ENCODE measurements at regions of chr6 and their contacts with region 1.

Region 1: DNA sequence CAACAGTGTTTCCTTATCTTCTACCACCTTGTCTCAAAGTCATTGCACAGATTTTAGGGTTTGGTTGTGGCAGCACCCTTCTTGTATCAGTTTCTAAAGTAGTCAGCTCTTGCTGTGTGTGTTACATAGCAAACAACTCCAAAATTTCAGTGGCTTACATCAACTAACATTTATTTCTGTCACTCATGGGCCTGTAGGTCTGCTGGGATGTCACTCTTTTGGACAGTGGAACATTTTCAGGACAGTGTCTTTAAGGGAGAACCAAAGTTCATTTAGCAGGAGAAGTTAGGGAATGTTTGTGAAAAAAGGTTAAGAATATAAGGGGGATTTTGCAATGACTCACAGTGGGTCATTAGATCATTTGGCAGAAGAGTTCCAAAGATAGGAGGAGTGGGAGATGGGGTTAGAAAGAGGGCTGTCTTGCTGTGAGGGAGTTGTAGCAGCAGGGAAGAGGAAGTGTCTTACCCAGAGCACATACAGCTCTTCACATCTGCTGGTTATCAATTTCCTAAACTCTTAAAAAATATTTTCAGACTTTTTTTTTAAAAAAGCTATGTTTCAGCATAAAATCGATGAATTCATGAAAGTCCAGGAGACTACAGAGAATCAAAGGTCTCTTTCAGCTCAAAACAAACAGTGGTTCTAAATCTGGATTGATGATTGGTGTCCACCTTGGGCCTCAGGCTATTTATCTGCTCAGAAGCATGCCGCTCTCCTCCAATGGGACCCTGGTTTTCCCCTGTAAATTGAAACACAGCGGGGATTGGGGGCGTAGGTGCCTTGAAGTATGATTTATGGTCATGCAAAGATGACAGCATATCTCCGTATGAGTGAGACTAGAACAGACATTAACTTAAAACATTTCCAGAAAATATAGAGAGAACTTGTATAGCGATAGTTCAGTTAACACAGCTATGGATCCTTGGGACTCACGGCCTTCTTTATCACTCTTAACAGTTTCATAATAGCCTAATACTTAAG is 117.3 kb downstream of the B3GAT2 start:
- DNase-seq: no peak
- CTCF ChIP-seq: no peak

Region 2: DNA sequence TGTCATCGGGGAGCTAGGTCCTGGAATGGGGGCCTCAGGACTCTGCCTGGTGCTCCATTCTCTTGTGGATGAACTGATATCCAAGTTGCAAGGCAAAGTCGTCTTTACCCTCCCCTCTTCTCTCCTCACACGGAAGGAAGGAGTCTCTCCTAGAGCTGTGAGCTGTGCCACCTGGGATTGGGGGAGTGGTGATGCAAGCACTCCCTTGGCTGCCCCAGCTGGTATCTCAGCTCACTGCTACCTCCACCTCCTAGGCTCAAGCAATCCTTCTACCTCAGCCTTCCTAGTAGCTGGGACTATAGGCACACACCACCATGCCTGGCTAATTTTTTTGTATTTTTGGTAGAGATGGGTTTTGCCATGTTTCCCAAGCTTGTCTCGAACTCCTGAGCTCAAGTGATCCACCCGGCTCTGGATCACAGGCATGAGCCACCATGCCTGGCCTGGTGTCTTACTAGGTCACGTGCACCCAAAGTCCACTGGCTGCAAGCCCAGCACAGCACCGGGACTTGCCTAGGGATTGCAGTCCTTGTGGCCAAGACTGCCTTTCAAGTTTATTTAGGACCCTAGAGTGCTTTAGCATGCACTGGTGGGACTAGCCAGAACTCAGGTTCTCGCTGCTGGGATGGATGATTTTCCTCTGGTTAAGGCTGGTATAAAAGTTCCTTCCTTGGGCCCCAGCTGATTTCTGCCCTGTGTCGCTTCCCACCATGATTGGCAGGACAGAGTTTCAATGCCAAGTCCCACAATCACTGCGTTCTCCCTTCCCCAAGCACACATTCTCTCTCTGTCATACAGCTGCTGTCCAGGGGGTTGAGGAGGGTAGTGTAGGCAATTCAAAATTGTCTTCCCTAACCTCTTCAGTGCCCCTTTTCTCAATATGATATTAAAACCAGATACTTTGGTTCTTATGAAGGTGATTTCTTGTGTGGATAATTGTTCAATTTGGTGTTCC is 138.4 kb before region 1 on chr6:
- CTCF ChIA-PET with region 1: no interaction called
- POLR2A ChIA-PET with region 1: no interaction called
- DNase-seq: no peak
- CTCF ChIP-seq: no peak

Region 3: DNA sequence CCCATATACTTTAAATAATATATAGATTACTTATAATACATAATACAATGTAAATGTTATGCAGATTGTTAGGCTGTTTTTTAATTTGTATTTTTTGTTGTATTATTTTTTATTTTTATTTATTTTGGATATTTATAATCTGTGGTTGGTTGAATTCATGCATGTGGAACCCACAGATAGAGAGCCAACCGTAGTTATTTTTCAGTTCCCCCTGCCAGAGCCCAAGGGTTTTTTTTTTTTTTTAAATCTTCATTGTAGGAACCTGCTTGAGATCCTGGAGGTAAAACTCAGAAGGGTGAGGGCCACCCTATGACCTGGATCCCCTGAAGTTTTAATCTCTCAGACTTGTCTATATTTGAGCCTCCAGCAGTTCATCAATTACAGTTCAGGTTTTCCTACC is 15.9 kb before region 1 on chr6:
- CTCF ChIA-PET with region 1: interaction called, 15 read pairs
- POLR2A ChIA-PET with region 1: no interaction called
- DNase-seq: no peak
- CTCF ChIP-seq: no peak

Region 4: GRCh38 chr6:70952608-70953165 is 113.1 kb after region 1 on chr6:
- CTCF ChIA-PET with region 1: no interaction called
- POLR2A ChIA-PET with region 1: no interaction called
- DNase-seq: no peak
- CTCF ChIP-seq: no peak

Region 5: GRCh38 chr6:71277926-71278600 is 438.5 kb after region 1 on chr6:
- CTCF ChIA-PET with region 1: no interaction called
- POLR2A ChIA-PET with region 1: no interaction called
- DNase-seq: no peak
- CTCF ChIP-seq: no peak

Measured in GM10248 (cell line).